K562 (cell line): ENCODE measurements at regions of chr12 and their contacts with region 1.

Region 1: GRCh38 chr12:42144408-42145196 is at the start of gene GXYLT1:
- DNase-seq: peak; percentile 92 to 95 (median 94)
- ATAC-seq: peak; percentile 96
- H3K4me3 ChIP-seq: peak within 1 kb of the TSS; percentile 67
- H3K27ac ChIP-seq: peak within 1 kb of the TSS; percentile 74
- H3K4me1 ChIP-seq: peaks cover 13 to 23% of the 10 kb centered on the region in 2 experiments; a peak in 4 of 5 replicates
- H3K27me3 ChIP-seq: no peaks in the 10 kb centered on the region
- CTCF ChIP-seq: 0 out of 6 replicates have a peak, but pooled peaks of 1 of the 3 experiments have one; percentile 1
- EP300 ChIP-seq: no peak
- POLR2A ChIP-seq: peak; percentile 91
- RAD21 ChIP-seq: no peak
- polyA plus RNA-seq, gene GXYLT1: 1.4 to 1.7 TPM

Region 2: GRCh38 chr12:42238240-42239140 is 93.9 kb after region 1 on chr12 and contains the start of gene YAF2:
- CTCF ChIA-PET with region 1: no interaction called
- POLR2A ChIA-PET with region 1: interaction called, 3 read pairs
- in situ Hi-C with region 1: no loop called
- intact Hi-C with region 1: loop called (anchors 2 kb)
- DNase-seq: peak; percentile 93 to 94 (median 94)
- ATAC-seq: peak; percentile 92
- H3K4me3 ChIP-seq: peak within 1 kb of the TSS; percentile 72
- H3K27ac ChIP-seq: peak within 1 kb of the TSS; percentile 93
- H3K4me1 ChIP-seq: peaks cover 5 to 14% of the 10 kb centered on the region in 2 experiments; a peak in 3 of 5 replicates
- H3K27me3 ChIP-seq: no peaks in the 10 kb centered on the region
- CTCF ChIP-seq: no peak
- EP300 ChIP-seq: no peak
- POLR2A ChIP-seq: peak; percentile 62
- RAD21 ChIP-seq: no peak
- polyA plus RNA-seq, gene YAF2: 14.9 to 19.6 TPM